ENCODE measurements at regions of chr16 and their contacts with region 1.

Region 1: DNA sequence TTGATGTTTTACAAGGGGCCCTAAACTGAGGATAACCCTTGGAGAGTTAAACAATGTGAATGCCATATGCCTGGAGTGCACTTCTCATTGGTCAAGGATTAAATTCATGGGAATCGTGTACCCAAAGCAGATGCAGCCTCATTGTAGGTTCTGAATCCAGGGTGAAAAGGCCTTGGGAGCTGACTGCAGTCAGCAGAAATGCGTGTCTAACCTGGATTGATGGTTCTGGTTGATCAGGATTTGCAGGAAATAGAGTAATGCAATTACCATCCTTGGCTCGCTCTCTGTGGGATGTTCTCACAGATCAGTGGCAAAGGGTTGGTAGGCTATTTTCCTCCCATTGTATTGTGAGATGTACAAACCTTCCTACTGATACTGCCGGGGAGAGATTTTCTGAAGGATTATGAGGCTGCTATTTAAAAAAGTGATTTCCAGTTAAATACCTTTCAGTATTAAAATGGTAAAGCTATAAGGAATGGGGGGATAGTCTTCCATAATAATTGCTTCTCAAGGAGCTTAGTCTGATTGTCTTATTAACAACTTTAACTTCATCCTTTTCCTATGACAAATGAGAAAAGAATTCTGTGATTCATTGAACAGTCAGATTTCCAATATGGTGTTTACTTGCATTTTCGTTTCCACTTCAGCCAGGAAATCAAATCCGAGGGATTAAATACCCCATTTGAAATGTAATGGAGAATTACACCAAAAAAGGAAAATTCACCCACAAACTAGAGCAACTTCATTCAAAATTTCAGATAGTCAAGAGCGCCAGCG is 1028.1 kb upstream of the EEF2KMT start:
- DNase-seq: no peak
- ATAC-seq: no peak
- H3K4me3 ChIP-seq: no peak overlapping the region
- H3K27ac ChIP-seq: no peak overlapping the region
- H3K4me1 ChIP-seq: no peaks in the 10 kb centered on the region
- H3K27me3 ChIP-seq: no peaks in the 10 kb centered on the region

Region 2: DNA sequence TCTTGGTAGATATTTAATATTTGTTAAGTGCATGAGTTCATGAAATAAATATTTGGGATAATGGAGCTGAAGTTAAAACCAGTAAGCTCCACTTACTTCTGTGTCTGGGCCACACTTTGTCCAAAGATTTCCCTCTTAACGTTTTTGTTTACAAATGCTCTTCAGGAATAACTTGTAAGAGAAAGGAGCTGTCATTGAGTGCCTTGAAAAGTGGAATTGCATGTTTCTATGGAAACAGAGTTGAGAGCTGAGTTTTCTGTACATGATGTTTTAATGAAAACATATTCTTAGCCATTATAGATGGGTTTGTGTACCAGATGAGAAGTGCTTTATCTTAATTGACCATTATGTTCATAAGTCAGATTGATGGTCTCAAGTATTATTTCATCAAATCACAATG is 17.3 kb after region 1 on chr16:
- intact Hi-C with region 1: loop called in 1 of 2 experiments (anchors 2 kb)
- DNase-seq: no peak
- ATAC-seq: no peak
- H3K4me3 ChIP-seq: no peak overlapping the region
- H3K27ac ChIP-seq: no peak overlapping the region
- H3K4me1 ChIP-seq: no peaks in the 10 kb centered on the region
- H3K27me3 ChIP-seq: peaks cover 0 to 2% of the 10 kb centered on the region in 2 donors

Region 3: DNA sequence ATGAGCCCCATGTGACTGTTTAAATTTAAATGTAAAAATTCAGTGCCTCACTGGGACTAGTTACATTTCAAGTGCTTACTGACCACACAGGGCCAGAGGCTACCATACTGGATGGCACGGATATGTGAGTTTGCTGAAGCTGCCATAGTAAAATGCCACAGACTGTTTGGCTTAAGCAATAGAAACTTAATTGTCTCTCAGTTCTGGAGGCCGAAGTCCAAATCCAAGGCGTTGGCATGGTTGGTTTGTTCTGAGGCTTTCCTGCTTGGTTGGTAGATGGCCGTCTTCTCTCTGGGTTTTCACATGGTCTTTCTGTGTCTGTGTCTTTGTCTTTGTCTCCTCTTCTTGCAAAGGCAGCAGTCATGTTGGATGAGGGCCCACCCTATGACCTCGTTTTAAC is 328.1 kb after region 1 on chr16:
- intact Hi-C with region 1: no loop called
- DNase-seq: no peak
- ATAC-seq: no peak
- H3K4me3 ChIP-seq: no peak overlapping the region
- H3K27ac ChIP-seq: no peak overlapping the region
- H3K4me1 ChIP-seq: no peaks in the 10 kb centered on the region
- H3K27me3 ChIP-seq: no peaks in the 10 kb centered on the region

Measured in aorta (tissue), 5 donors.